ENCODE measurements at regions of chr5 and their contacts with region 1.

Region 1: DNA sequence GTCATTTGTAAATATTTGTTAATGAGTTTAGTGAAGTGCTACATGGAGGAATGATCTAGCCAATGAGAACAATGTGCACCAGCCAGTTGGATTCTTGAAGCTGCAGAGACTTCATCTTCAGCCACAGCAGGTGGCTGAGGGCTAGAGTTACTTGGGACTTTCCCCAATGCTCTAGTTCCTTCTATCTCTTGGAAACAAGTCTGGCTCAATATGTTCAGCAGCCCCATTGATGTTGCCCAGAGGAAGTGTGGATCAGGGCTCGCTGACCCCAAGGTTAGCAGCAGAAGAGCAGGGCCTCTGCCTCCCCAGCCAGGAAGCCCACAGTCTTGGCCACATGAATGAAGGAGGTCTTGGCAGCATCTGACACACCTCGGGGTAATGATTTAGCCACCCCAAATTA is 117.5 kb downstream of the SLC1A3 start:
- DNase-seq: peak; percentile 80
- ATAC-seq: peak; percentile 54
- H3K4me3 ChIP-seq: peak overlapping the region; percentile 38 to 86 (median 62)
- H3K4me3 Mint-ChIP-seq: peak overlapping the region; percentile 91
- H3K27ac ChIP-seq: peak overlapping the region; percentile 77 to 90
- H3K27ac Mint-ChIP-seq: peak overlapping the region; percentile 98
- H3K4me1 ChIP-seq: peaks cover 56 to 57% of the 10 kb centered on the region in 2 donors
- H3K4me1 Mint-ChIP-seq: peaks cover 58% of the 10 kb centered on the region
- H3K27me3 ChIP-seq: no peaks in the 10 kb centered on the region
- H3K27me3 Mint-ChIP-seq: no peaks in the 10 kb centered on the region
- CTCF ChIP-seq: no peak

Region 2: GRCh38 chr5:36695677-36696673 is 27.9 kb before region 1 on chr5:
- CTCF ChIA-PET with region 1: interaction called, 59 read pairs
- POLR2A ChIA-PET with region 1: no interaction called
- intact Hi-C with region 1: loop called (anchors 1 kb)
- DNase-seq: peak; percentile 59
- ATAC-seq: peak; percentile 52
- H3K4me3 ChIP-seq: no peak overlapping the region
- H3K4me3 Mint-ChIP-seq: no peak overlapping the region
- H3K27ac ChIP-seq: no peak overlapping the region
- H3K27ac Mint-ChIP-seq: peak overlapping the region; percentile 4
- H3K4me1 ChIP-seq: peaks cover 23 to 25% of the 10 kb centered on the region in 2 donors
- H3K4me1 Mint-ChIP-seq: peaks cover 28% of the 10 kb centered on the region
- H3K27me3 ChIP-seq: no peaks in the 10 kb centered on the region
- H3K27me3 Mint-ChIP-seq: peaks cover 4% of the 10 kb centered on the region
- CTCF ChIP-seq: peak; percentile 72

Region 3: DNA sequence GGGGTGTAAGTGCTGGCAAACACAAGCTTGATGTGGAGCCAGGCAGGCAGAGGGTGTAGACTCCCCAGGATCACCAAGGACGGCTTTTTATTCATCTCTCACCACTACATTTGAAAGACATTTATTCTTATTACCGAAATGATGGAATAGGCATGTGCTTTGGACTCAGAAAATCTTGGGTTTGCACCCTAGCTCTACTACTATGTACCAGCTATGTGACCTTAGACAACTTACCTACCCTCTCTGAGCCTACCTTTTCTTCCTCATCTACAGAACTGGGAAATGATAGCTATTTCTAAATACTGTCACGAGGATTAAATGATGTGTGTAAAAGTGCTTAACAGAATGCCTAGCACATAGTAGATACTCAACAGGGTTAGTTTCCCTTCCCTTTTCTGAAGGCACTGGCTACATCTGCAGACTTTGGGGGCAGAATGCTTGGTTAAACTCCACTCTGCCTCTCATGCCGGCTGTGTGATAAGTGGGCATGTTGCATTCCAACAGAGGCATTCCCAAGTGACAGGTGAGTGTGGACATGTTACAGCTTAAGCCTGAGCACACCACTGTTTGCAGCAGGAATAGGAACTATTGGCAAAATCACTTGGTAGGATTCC is 22.7 kb before region 1 on chr5:
- CTCF ChIA-PET with region 1: interaction called, 27 read pairs
- POLR2A ChIA-PET with region 1: no interaction called
- intact Hi-C with region 1: loop called (anchors 1 kb)
- DNase-seq: peak; percentile 81
- ATAC-seq: peak; percentile 99
- H3K4me3 ChIP-seq: peak overlapping the region in 1 of 5 experiments; percentile 12
- H3K4me3 Mint-ChIP-seq: peak overlapping the region; percentile 69
- H3K27ac ChIP-seq: peak overlapping the region; percentile 27 to 37
- H3K27ac Mint-ChIP-seq: peak overlapping the region; percentile 86
- H3K4me1 ChIP-seq: peaks cover 23 to 25% of the 10 kb centered on the region in 2 donors
- H3K4me1 Mint-ChIP-seq: peaks cover 28% of the 10 kb centered on the region
- H3K27me3 ChIP-seq: no peaks in the 10 kb centered on the region
- H3K27me3 Mint-ChIP-seq: no peaks in the 10 kb centered on the region
- CTCF ChIP-seq: no peak

Region 4: GRCh38 chr5:36978196-36978595 is 254.3 kb after region 1 on chr5:
- CTCF ChIA-PET with region 1: no interaction called
- POLR2A ChIA-PET with region 1: no interaction called
- intact Hi-C with region 1: no loop called
- DNase-seq: no peak
- ATAC-seq: no peak
- H3K4me3 ChIP-seq: no peak overlapping the region
- H3K4me3 Mint-ChIP-seq: no peak overlapping the region
- H3K27ac ChIP-seq: no peak overlapping the region
- H3K27ac Mint-ChIP-seq: no peak overlapping the region
- H3K4me1 ChIP-seq: no peaks in the 10 kb centered on the region
- H3K4me1 Mint-ChIP-seq: peaks cover 12% of the 10 kb centered on the region
- H3K27me3 ChIP-seq: no peaks in the 10 kb centered on the region
- H3K27me3 Mint-ChIP-seq: no peaks in the 10 kb centered on the region
- CTCF ChIP-seq: no peak

Region 5: GRCh38 chr5:37234288-37234687 is 510.4 kb after region 1 on chr5:
- CTCF ChIA-PET with region 1: no interaction called
- POLR2A ChIA-PET with region 1: interaction called, 11 read pairs
- intact Hi-C with region 1: no loop called
- DNase-seq: no peak
- ATAC-seq: no peak
- H3K4me3 ChIP-seq: no peak overlapping the region
- H3K4me3 Mint-ChIP-seq: no peak overlapping the region
- H3K27ac ChIP-seq: no peak overlapping the region
- H3K27ac Mint-ChIP-seq: no peak overlapping the region
- H3K4me1 ChIP-seq: no peaks in the 10 kb centered on the region
- H3K4me1 Mint-ChIP-seq: no peaks in the 10 kb centered on the region
- H3K27me3 ChIP-seq: no peaks in the 10 kb centered on the region
- H3K27me3 Mint-ChIP-seq: no peaks in the 10 kb centered on the region
- CTCF ChIP-seq: no peak